Sciatic nerve (tissue), 2 donors: ENCODE measurements at regions of chr22 and their contacts with region 1.

Region 1: DNA sequence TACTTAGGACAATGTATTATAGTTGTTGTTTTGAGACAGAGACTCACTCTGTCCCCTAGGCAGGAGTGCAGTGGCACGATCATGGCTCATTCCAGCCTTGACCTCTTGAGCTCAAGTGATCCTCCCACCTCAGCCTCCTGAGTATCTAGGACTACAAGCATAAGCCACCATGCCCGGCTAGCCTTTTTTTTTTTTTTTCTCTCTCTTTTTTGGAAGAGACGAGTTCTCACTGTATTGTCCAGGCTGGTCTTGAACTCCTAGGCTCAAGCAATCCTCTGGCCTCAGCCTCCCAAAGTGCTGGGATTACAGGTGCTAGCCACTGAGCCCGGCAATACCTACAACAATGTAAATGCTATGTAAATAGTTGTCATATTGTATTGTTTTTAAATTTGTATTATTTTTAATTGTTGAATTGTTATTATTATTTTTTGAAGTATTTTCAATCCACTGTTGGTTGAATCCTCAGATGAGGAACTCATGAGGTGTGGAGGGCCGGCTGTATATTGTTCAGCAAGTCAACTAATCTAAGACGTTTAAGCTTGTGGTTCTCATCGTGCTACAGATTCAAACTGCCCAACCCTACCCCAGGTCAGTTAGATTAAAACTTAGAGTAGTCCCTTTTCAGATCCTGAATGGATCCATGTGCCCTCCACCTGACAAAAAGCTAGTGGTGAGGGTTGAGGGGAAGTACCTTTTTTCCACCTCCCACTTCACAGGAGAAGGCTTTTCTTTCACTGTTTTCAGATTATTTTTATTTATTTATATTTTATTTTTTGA is 11.9 kb upstream of the ZNF280A start:
- DNase-seq: no peak
- ATAC-seq: no peak

Region 2: GRCh38 chr22:22001664-22002525 is 530.1 kb before region 1 on chr22:
- intact Hi-C with region 1: loop called (anchors 5 kb)
- DNase-seq: no peak
- ATAC-seq: no peak

Region 3: DNA sequence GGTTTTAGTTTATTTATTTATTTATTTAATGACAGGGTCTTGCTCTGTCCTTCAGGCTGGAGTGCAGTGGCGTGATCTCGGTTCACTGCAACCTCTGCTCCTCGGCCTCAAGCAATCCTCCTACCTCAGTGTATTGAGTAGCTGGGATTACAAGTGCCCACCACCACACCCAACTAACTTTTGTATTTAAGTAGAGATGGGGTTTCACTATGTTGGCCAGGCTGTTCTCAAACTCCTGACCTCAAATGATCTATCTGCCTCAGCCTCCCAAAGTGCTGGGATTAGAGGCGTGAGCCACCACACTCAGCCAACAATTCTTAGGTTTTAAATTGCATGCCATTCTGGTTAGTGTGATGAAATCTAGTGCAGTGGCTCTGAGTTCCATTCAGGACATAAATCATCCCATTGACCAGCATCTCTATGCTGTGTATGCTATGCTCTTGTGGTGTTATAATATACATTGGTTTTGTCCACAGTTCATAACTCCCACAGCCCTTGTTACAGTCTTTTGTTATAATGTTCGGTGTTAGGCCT is 51.9 kb before region 1 on chr22:
- intact Hi-C with region 1: no loop called
- DNase-seq: no peak
- ATAC-seq: no peak